Activated B cell treated with CpG ODN at 0.5 μM for 24 hours (primary cell): ENCODE measurements at regions of chr1 and their contacts with region 1.

Region 1: GRCh38 chr1:206684478-206685333 is at the start of gene MAPKAPK2:
- DNase-seq: peak; percentile 72
- ATAC-seq: peak; percentile 65
- H3K4me3 Mint-ChIP-seq: peak within 1 kb of the TSS; percentile 94
- H3K27ac Mint-ChIP-seq: peak within 1 kb of the TSS; percentile 90
- H3K4me1 Mint-ChIP-seq: peaks cover 80% of the 10 kb centered on the region
- H3K27me3 Mint-ChIP-seq: no peaks in the 10 kb centered on the region
- CTCF ChIP-seq: no peak
- total RNA-seq, gene MAPKAPK2: 71.2 and 72.1 TPM in 2 replicates

Region 2: GRCh38 chr1:206612129-206612876 is 72.4 kb before region 1 on chr1 and contains the start of gene EIF2D:
- CTCF ChIA-PET with region 1: no interaction called
- POLR2A ChIA-PET with region 1: interaction called, 3 read pairs
- intact Hi-C with region 1: loop called (anchors 1 kb)
- DNase-seq: peak; percentile 95
- ATAC-seq: peak; percentile 98
- H3K4me3 Mint-ChIP-seq: peak within 1 kb of the TSS; percentile 96
- H3K27ac Mint-ChIP-seq: peak within 1 kb of the TSS; percentile 97
- H3K4me1 Mint-ChIP-seq: peaks cover 30% of the 10 kb centered on the region
- H3K27me3 Mint-ChIP-seq: no peaks in the 10 kb centered on the region
- CTCF ChIP-seq: peak; percentile 72
- total RNA-seq, gene EIF2D: 61.2 and 65.4 TPM in 2 replicates

Region 3: DNA sequence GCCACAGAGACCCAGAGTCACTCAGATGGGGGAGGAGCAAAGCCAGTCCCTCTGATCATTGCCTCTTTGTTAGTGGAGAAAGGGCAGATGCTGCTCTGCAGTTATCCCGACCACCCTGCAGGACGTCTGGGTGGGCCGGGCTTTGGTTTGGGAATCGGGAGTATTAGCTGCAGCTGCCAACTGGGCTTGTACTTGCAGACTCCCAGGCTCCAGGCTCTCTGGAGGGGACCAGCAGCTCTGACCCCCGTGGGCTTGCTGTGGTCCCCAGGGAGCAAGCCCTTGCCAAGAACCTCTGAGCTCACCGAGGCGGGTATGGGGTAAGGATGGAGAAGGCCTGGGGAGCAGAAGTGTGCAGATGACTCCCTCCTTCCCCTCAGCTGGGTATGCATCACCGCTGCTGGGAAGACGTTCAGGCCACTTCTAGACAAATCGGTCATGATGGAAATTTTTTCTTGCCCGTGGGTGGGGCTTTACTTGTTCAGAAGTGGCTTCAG is 21.6 kb after region 1 on chr1:
- CTCF ChIA-PET with region 1: no interaction called
- POLR2A ChIA-PET with region 1: interaction called, 6 read pairs
- intact Hi-C with region 1: loop called (anchors 2 kb)
- DNase-seq: no peak
- ATAC-seq: peak; percentile 14
- H3K4me3 Mint-ChIP-seq: peak overlapping the region; percentile 18
- H3K27ac Mint-ChIP-seq: peak overlapping the region; percentile 33
- H3K4me1 Mint-ChIP-seq: peaks cover 91% of the 10 kb centered on the region
- H3K27me3 Mint-ChIP-seq: no peaks in the 10 kb centered on the region
- CTCF ChIP-seq: no peak

Region 4: DNA sequence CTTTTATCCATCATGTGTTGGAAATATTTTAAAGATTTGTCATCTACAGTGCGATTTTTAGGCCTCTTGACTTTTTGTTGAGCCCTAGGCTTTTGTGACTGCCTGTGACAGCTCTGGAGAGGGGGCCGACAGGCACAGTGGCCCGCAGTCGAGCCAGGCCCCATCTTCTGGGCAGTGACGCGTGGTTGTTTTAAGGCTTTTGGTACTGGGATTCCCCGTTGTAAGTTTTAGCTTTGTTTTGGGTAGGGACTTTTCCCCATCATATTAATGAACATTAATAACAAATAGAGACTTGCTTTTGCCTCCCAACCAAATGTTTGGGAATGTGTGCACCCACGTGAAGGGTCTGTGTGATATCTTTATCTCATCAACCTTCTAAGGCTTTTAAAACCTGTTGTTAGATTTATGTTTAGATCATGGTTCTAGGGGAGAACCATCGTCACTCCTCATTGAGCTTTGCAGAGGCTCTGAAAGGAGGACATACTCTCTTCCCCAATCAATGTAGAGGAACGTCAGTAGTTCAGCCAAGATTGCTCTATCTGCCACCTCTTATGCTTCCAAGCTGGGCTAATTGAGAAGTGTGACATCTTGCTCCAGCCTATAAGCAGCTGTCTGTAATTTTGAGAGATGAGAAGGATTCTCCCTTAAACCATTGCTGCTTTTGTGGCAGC is 34.6 kb after region 1 on chr1:
- CTCF ChIA-PET with region 1: interaction called, 3 read pairs
- POLR2A ChIA-PET with region 1: interaction called, 10 read pairs
- intact Hi-C with region 1: loop called (anchors 1 kb)
- DNase-seq: no peak
- ATAC-seq: peak; percentile 81
- H3K4me3 Mint-ChIP-seq: peak overlapping the region; percentile 42
- H3K27ac Mint-ChIP-seq: peak overlapping the region; percentile 90
- H3K4me1 Mint-ChIP-seq: peaks cover 73% of the 10 kb centered on the region
- H3K27me3 Mint-ChIP-seq: no peaks in the 10 kb centered on the region
- CTCF ChIP-seq: no peak

Region 5: DNA sequence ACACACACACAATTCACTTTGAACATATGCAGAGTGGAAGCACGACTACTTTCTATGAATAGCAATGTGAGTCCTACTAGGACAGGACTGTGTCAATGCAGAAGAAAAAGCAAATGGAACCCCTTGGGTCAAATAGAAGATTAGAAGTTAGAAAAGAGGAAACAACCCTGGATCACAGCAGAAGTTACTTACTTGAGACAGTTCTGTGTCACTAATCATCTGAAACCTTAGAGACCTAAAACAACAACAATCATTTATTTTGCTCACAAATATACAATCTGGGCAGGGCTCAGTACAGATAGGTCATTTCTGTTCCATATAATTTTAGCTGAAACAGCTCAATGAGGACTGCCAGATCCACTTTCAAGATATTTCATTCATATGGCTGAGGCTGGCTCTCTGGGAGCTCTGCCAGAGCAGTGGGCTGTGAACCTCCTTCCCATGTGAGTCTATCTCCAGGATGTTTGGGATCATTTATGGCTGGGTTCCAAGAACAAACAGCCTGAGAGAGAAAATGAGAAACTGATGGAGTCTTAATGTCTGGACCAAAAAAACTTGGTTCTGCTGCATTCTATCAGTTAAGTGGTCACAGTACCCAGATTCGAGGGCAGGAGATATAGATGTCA is 130.1 kb after region 1 on chr1:
- CTCF ChIA-PET with region 1: no interaction called
- POLR2A ChIA-PET with region 1: no interaction called
- intact Hi-C with region 1: no loop called
- DNase-seq: no peak
- ATAC-seq: peak; percentile 69
- H3K4me3 Mint-ChIP-seq: peak overlapping the region; percentile 44
- H3K27ac Mint-ChIP-seq: peak overlapping the region; percentile 73
- H3K4me1 Mint-ChIP-seq: peaks cover 47% of the 10 kb centered on the region
- H3K27me3 Mint-ChIP-seq: no peaks in the 10 kb centered on the region
- CTCF ChIP-seq: no peak

Region 6: DNA sequence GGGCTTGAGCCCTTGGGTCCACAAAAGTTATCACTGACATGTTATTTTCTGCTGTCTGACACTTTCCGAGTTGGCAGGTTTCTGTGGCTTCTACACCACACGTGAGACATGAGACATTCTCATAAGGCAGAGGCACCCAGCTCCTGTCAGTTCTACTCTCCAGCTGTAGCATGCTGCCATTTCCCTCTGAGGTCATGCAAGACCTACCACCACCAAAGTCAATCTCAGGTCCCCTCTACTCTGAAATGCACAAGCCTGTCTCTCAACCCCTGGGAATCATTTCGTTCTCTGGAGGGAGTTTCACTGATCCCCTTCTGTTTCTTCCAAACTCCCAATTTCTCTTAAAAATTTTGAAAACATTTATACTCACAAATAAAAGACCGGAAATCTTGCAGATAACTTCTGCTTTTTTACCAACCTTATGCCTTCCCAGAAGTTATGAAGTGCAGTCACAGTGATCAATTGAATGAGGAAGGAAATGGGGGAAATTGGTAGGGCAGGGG is 730.0 kb after region 1 on chr1:
- CTCF ChIA-PET with region 1: no interaction called
- POLR2A ChIA-PET with region 1: no interaction called
- intact Hi-C with region 1: loop called (anchors 10 kb)
- DNase-seq: no peak
- ATAC-seq: peak; percentile 76
- H3K4me3 Mint-ChIP-seq: peak overlapping the region; percentile 76
- H3K27ac Mint-ChIP-seq: peak overlapping the region; percentile 96
- H3K4me1 Mint-ChIP-seq: peaks cover 83% of the 10 kb centered on the region
- H3K27me3 Mint-ChIP-seq: no peaks in the 10 kb centered on the region
- CTCF ChIP-seq: no peak